ENCODE measurements at regions of chr14 and their contacts with region 1.

Region 1: DNA sequence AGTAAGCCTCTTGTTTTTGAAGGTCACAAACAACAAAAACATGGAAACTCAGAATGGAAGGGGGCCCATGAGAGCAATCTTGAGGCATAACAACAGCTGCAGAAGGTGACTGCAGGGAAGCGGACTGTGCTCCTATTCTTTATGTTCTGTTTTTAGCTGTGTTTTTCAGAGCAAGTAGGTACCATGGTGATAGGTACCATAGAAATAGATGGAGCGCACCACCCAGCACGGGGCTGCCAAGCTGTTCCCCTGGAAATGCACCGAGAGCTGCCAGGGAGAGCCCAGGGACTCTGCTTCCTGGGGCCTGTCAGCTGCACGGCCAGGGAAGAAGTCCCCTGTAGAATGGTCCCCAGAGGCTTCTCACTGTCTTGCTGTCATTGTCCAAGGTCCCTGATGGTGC is 32.8 kb downstream of the DGLUCY start:
- DNase-seq: no peak
- H3K4me3 ChIP-seq: no peak overlapping the region
- H3K27ac ChIP-seq: no peak overlapping the region
- H3K4me1 ChIP-seq: peaks cover 4% of the 10 kb centered on the region
- H3K27me3 ChIP-seq: no peaks in the 10 kb centered on the region
- CTCF ChIP-seq: no peak

Region 2: DNA sequence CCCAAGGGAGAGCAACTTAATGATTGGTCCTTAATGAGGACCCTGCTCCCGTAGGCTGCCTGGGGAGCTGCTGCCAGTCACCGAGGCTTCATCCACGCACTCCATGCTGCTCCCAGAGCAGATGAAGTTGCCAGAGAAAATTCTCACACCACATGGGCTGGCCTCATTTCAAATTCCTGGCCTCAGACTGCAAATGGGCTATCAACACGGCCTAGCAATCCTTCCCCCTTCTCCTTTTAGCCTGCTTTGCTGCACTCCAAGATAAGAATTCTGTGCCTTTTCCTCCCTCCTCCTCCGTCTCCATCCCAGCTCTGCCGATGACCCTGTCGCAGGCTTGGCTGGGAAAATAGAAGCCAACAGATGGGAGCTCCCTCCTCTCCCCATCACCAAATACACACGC is 43.5 kb before region 1 on chr14:
- intact Hi-C with region 1: no loop called
- DNase-seq: no peak
- H3K4me3 ChIP-seq: no peak overlapping the region
- H3K27ac ChIP-seq: no peak overlapping the region
- H3K4me1 ChIP-seq: no peaks in the 10 kb centered on the region
- H3K27me3 ChIP-seq: no peaks in the 10 kb centered on the region
- CTCF ChIP-seq: no peak

Region 3: GRCh38 chr14:91169951-91170350 is 23.3 kb after region 1 on chr14:
- intact Hi-C with region 1: loop called (anchors 1 kb)
- DNase-seq: no peak
- H3K4me3 ChIP-seq: no peak overlapping the region
- H3K27ac ChIP-seq: no peak overlapping the region
- H3K4me1 ChIP-seq: no peaks in the 10 kb centered on the region
- H3K27me3 ChIP-seq: no peaks in the 10 kb centered on the region
- CTCF ChIP-seq: no peak

Region 4: DNA sequence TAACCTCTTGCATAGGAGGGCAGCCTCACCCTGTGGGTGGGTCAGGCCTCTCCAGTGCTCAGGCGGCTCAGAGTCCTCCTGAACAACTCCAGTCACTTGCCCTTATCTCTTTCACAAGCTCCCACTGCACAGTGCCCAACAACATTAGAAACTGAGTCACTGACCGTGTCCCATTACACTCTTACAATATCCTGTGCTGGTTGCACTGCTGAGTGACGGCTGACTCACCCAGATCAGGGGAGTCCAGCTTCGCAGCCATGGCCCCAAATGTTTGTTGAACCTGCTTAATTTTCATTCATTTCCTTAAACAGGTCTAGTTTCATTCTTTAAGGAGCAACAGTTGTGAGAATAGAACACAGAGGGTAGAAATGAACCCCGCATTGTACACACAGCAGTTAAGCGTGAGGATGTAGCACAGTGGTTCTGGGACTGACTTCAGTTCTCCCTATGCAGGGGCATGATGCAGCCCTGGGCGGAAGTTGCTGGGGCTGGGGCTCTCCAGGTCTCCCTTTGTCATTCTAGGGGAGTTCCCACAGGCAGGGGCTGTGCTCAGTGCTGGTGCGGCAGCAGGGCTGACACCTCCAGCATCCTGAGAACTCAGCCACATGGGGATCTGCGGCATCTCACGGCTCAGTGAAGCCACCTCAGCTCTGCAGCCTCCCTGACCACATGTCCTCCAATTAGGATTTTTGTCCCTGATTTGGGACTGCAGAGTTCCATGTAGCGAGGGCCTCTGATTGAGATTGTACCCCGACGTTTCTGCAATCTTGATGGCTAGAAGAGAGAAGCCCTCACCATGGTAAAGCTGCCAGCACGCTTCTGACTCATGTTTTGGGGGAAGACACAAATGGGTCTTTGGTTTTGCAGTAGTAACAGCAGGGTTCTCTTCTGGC is 81.7 kb after region 1 on chr14:
- intact Hi-C with region 1: no loop called
- DNase-seq: no peak
- H3K4me3 ChIP-seq: no peak overlapping the region
- H3K27ac ChIP-seq: peak overlapping the region; percentile 22
- H3K4me1 ChIP-seq: no peaks in the 10 kb centered on the region
- H3K27me3 ChIP-seq: no peaks in the 10 kb centered on the region
- CTCF ChIP-seq: no peak

Measured in colonic mucosa (tissue), 4 donors.